ENCODE measurements at regions of chr2 and their contacts with region 1.

Region 1: DNA sequence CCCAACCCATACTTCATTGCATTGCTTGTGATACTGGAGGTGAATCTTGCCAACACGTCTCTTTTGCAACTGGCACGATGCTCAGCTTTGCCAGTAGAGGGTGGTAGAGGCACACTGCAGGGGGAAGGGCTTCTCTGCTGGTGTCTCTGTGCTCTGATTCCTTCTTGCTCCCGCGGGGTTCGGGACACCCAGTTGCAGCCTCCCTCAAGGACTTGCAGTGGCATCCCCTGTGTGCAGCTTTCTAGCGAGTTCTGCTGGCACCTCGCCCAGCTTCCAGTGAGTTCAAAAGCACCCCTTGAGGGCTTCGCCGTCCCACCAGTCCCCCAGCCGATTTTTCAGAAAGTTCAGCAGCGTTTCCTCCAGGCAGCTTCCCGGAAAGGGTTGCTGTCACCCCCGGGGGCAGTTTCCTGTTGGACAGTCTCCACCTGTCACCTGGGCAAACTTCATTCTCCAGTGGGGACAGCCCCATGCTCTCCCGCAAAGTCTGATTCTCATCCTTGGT is 35.3 kb upstream of the EN1 start:
- DNase-seq: peak; percentile 5
- H3K4me3 ChIP-seq: peak overlapping the region; percentile 51
- CTCF ChIP-seq: peak; percentile 98

Region 2: DNA sequence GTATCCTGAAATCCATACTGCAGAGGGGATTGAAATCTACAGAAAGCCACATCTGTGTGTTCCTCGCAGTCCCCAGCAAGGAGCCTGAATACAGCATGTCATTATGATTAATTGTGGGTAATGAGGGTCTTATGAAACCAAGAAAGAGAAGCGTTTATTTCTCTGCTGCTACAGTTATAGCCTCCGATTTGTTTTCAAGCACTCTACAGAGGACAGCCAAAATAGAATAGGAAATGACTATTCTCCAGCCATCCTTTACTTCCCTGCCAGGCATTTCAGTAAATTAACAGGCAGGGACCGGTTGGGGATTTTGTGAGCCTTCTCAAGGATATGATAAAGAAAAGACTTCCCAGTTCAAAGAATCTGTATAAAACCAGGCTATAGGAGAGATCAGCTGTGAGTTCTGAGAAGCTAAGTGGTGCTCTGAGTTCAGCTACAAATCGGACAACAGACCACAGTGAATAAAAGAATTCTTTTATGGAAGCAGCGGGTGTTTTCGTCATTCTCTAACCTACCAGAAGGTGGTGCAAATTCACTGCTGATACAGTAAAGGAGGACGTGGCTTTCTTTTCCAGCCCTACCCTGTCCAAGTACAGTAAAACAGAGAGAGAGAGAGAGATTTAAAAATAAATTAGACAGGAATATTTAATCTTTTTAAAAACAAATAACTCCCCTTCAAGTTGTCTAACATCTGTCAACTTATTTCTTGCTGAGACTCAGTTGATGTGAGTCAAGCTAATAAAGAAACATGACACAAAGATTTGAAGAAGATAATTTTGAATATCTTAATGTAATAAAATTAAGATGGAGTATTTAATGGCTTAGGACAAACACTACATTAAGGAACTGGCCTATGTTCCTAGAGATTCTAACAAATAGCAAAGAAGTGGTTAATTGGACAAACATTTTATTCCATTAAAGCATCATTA is 660.8 kb before region 1 on chr2:
- CTCF ChIA-PET with region 1: interaction called, 13 read pairs
- POLR2A ChIA-PET with region 1: no interaction called
- DNase-seq: peak; percentile 53
- H3K4me3 ChIP-seq: no peak overlapping the region
- CTCF ChIP-seq: peak; percentile 69

Region 3: DNA sequence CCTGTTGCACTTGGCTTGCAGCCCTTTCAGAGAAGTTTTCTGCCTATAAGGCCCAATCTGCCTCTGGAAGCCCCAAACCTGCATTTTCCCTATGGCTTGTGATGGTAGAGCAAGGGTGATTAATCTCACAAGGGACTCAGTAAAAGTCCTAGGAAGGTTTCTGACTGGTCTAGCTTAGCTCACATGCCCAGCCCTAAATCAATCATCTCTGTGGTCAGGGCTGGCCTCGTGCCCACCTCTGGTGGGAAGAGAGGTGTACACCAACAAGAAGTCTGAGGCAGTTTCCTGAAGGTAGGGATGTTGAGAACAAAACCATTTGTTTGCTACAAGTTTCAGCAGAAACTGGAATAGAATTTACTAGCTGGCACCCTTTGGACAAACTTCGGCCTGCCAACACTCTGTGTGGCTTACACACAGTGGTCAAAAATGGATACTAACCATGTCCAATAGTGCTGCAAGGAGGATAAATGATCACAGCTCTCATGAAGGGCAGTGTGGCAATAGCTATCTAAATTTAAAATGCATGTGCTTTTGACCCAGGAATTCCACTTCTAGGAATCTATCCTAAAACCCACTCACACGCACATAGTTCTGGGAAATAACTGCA is 131.7 kb before region 1 on chr2:
- CTCF ChIA-PET with region 1: no interaction called
- POLR2A ChIA-PET with region 1: no interaction called
- DNase-seq: no peak
- H3K4me3 ChIP-seq: no peak overlapping the region
- CTCF ChIP-seq: no peak

Region 4: DNA sequence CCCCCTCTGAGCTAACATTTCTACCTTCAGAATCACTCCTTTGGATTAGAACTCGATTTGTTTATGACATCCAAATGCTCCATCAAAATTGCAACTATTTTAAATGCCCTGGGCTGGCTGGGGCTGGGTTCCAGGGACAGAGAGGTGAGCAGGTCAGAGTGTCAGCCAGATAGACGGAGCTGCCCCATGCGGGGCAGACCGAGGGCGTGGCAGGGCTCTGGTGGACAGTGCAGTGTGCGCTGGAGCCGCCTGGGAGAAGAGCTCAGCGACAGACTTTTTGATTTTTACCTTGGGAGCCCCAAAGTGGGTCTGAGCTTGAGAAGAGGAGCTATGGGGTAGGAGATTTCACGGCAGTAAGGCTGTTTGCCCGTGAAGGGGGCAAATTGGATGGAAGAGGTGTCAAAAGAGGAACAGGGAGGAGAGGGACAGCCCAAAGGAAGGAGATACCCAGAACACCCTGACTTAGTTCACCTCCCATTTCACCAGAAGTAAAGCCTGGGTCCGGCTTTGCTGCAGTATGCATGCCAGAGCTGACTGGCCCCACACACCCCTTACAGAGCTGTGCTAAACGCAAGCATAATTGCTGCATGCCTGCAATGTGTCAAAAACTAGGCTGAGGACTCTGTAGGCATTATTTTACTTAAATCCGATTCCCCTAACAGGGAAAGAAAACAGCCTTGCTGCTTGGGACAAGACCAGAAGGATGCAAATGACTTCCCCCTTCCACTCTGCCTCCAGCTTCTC is 69.0 kb before region 1 on chr2:
- CTCF ChIA-PET with region 1: no interaction called
- POLR2A ChIA-PET with region 1: no interaction called
- DNase-seq: no peak
- H3K4me3 ChIP-seq: no peak overlapping the region
- CTCF ChIP-seq: no peak

Region 5: GRCh38 chr2:118902266-118903028 is 19.7 kb after region 1 on chr2:
- CTCF ChIA-PET with region 1: interaction called, 18 read pairs
- POLR2A ChIA-PET with region 1: no interaction called
- DNase-seq: no peak
- H3K4me3 ChIP-seq: no peak overlapping the region
- CTCF ChIP-seq: no peak

Region 6: DNA sequence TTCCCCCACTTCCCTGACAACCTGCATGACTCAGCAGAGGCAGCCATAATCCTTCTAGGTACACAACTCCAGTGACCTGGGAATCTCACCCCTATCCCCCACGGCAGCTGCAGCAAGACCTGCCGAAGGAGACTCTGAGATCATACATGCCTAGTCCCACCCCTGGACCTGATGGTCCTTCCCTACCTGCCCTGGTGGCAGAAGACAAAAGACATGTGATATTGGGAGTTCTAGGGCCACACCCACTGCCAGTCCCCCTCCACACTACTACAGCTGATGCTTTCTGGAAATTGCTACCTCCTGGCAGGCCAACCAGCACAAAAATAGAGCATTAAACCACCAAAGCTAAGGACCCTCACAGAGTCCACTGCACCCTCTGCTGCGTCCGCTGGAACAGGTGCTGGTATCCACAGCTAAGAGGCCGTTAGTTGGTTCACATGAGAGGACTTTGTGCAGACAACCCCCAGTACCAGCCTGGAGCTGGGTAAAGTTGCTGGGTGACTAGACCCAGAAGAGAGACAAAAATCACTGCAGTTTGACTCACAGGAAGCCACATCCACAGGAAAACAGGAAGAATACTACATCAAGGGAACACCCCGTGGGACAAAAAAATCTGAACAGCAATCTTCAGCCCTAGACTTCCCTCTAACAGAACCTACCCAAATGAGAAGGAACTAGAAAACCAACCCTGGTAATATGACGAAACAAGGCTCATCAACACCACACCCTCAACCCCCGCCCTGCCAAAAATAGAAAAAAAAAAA is 71.7 kb after region 1 on chr2:
- CTCF ChIA-PET with region 1: no interaction called
- POLR2A ChIA-PET with region 1: no interaction called
- DNase-seq: no peak
- H3K4me3 ChIP-seq: no peak overlapping the region
- CTCF ChIP-seq: no peak

Region 7: DNA sequence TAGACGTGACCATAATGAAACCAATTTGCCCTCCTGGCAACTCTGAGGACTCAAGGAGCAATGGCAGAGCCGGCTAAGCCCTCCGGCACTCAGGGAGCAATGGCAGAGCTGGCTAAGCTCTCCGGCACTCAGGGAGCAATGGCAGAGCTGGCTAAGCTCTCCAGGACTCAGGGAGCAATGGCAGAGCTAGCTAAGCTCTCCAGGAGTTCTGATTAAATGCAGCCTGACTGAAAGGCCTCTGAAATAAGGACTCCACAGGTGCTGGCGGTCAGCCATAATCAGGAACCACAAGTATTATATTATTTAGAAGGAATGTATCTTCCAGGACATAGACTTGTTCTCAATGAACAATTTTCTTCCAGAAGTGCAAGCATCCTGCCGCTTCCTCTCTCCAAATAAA is 418.7 kb after region 1 on chr2:
- CTCF ChIA-PET with region 1: interaction called, 11 read pairs
- POLR2A ChIA-PET with region 1: no interaction called
- DNase-seq: no peak
- H3K4me3 ChIP-seq: no peak overlapping the region
- CTCF ChIP-seq: no peak

Region 8: DNA sequence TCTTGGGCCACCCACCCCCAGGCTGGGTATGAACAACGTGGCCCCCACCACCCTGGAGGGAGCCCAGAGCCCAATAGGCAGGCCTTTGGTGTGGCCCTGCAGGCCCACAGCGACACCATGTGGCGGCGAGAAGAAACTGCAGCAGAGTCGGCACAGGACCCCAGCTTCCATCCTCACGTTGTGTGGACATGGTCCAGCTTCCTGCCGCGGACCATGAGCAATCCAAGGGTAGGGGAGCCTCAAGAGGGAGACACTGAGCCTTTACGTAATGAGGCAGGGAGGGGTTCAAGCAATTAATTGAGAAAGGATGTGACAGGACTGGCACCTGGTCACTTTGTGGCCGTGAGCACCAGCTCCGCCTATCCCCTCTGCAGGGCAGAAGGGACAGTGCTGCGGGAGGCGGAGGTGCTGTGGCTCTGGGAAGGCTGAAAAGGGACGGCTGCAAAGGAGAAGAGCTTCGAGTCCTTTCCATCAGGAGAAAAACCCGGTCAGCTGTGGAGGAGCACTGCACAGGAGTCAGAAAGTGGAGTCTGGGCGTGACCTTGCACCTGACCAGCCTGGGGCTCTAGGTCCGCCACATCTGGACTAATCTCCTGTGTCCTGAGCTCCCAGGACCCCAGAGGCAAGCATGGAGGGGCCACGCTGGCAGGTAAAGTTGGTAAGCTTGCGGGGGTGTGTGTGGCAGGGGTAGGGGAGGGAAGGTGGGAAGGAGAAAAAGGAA is 593.7 kb after region 1 on chr2:
- CTCF ChIA-PET with region 1: interaction called, 30 read pairs
- POLR2A ChIA-PET with region 1: no interaction called
- DNase-seq: no peak
- H3K4me3 ChIP-seq: no peak overlapping the region
- CTCF ChIP-seq: peak; percentile 93

Region 9: DNA sequence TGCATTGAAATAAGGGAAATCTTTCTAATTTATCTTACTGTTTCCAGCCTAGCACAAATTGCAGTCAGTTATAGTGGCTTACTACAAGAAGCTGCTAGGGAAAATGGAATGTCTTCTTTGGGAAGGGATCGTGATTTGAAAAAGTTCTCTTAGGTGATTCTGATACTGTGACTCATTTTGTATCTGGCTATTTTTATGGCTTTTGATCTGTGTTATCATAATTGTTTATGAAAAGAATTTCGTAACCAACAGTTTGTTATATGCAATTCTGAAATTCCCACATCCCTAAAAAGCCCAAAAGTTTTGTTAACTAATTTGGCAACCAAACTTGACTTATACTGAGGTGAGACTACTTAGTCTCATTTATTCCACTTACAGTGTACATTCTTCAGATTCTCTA is 889.4 kb after region 1 on chr2:
- CTCF ChIA-PET with region 1: no interaction called
- POLR2A ChIA-PET with region 1: no interaction called
- DNase-seq: no peak
- H3K4me3 ChIP-seq: no peak overlapping the region
- CTCF ChIP-seq: no peak

Measured in AG04449 (cell line).